ENCODE measurements at regions of chr17 and their contacts with region 1.

Region 1: DNA sequence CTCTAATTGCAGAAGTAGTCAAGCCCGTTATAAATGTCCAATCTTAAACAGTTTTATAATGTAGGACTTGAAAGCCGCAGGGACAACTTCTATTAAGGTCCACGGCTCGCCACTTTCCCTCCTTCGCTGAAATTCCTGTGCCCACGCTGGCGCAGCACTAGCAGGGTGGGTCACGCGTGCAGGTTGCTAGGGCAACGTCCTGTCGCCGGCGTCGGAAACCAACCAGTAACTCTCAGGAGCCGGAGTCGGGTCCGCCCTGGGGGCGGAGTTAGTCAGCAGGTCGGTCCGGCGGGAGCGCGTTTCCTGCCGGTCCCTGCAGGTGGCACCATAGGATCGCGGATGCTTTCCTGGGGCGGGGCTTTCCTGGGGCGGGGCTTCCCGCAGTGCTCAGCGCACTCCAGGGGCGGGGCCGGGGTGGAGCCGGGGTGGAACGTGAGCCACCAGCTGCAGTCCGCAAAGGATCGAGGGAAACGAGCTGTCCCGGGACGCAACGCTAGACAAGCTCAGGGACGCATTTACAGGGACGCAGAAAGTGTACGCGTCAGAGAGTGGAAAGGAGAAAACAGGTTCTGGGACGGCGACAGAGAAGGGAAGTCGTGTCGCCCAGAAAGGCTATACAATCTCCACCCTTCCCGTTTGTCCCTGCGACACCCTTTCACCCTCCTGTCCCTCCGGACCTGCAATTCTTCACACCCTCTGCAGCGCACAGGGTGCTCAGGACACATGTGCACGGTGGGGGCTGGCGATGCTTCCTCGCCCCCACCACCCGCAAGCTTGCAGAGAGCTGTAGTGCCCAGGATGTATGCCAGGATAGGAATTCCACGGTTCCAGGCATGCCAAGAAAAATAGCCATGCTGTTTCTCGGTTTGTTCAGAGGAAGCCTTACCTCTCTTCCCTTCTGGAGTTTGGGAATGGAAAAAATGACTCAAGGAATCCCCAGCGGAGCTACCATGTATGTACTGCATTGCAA is 12.4 kb downstream of the COPZ2 start:
- DNase-seq: peak; percentile 99
- ATAC-seq: peak; percentile 94
- H3K4me3 ChIP-seq: peak overlapping the region; percentile 54
- H3K27ac ChIP-seq: peak overlapping the region; percentile 85
- H3K4me1 ChIP-seq: peaks cover 36% of the 10 kb centered on the region
- H3K27me3 ChIP-seq: no peaks in the 10 kb centered on the region
- CTCF ChIP-seq: peak; percentile 72

Region 2: DNA sequence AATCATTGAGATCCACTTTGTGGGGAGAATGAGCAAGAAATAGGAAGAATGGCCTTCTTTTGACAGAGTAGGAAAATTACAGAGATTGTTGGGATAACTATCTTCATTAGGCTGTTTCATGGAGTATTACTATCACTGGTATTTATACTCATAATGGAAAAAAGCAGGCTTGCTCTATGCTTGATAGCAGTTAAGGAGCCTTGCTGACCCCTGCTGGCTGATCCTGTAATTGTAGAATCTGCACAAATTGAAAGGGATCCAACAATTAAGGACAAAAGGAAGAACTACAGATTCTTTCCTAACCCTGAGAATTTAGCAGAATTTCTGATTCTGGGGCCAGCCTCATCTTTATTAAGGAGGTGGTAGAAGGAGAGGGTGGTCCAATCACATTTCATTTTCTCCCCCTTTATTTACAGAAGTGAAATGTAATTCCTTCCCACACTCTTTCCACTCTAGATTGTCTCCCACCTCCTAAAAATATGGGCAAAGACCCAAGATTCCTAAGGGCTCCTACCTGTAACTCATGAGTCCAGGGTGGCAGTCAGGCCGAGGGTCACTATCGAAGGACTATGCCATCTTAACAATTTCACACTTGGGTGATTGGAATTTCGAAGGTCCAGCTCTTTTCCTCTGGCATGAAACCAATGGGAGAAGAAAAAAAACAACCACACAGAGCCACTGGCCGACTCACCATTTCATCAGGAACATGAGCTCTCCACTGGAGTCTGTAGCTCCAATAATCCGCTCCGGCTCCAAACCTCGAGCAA is 49.3 kb after region 1 on chr17:
- intact Hi-C with region 1: loop called (anchors 5 kb)
- DNase-seq: peak; percentile 15
- ATAC-seq: peak; percentile 93
- H3K4me3 ChIP-seq: no peak overlapping the region
- H3K27ac ChIP-seq: no peak overlapping the region
- H3K4me1 ChIP-seq: no peaks in the 10 kb centered on the region
- H3K27me3 ChIP-seq: no peaks in the 10 kb centered on the region
- CTCF ChIP-seq: peak; percentile 79

Region 3: DNA sequence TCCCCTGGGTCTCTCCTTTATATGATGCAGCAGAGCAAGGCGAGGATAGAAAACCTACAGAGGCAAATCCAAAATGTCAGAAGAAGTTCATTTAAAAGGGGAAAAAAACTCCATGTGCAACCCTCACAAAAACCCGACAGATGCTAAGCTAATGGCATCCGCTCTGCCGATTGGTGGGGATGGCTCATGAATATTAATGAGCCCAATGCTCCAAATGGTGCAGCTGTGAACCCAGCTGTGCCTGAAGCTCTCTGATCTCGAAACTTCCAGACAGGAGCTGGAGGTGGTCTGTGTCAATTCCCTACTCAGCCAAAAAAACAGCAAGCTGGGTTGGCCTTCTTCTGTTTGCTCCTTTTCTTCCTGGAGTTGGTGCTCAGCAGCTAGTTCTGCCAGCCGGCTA is 97.9 kb after region 1 on chr17:
- intact Hi-C with region 1: no loop called
- DNase-seq: no peak
- ATAC-seq: no peak
- H3K4me3 ChIP-seq: no peak overlapping the region
- H3K27ac ChIP-seq: no peak overlapping the region
- H3K4me1 ChIP-seq: no peaks in the 10 kb centered on the region
- H3K27me3 ChIP-seq: no peaks in the 10 kb centered on the region
- CTCF ChIP-seq: no peak

Measured in upper lobe of right lung (tissue), 1 donor.